Naive thymus-derived CD4-positive, alpha-beta T cell (primary cell): ENCODE measurements at regions of chr1 and their contacts with region 1.

Region 1: GRCh38 chr1:98870959-98871903 is 133.4 kb downstream of the PLPPR5 start:
- DNase-seq: peak in 8 of 9 donors; percentile 27 to 96 (median 92)
- ATAC-seq: peak; percentile 96
- H3K4me3 ChIP-seq: peak overlapping the region; percentile 56
- H3K4me3 Mint-ChIP-seq: peak overlapping the region; percentile 74 to 91 (median 86)
- H3K27ac ChIP-seq: peak overlapping the region; percentile 83
- H3K27ac Mint-ChIP-seq: peak overlapping the region; percentile 88 to 97 (median 93)
- H3K4me1 ChIP-seq: peaks cover 18 to 24% of the 10 kb centered on the region in 2 donors
- H3K4me1 Mint-ChIP-seq: peaks cover 21 to 66% (median 47%) of the 10 kb centered on the region in 7 donors
- H3K27me3 ChIP-seq: no peaks in the 10 kb centered on the region
- H3K27me3 Mint-ChIP-seq: no peaks in the 10 kb centered on the region

Region 2: GRCh38 chr1:98813738-98814309 is 57.4 kb before region 1 on chr1:
- CTCF ChIA-PET with region 1: no interaction called
- POLR2A ChIA-PET with region 1: interaction called, 3 read pairs
- intact Hi-C with region 1: loop called (anchors 5 kb)
- DNase-seq: no peak
- ATAC-seq: no peak
- H3K4me3 ChIP-seq: no peak overlapping the region
- H3K4me3 Mint-ChIP-seq: peak overlapping the region in 6 of 10 donors; percentile 6 to 48 (median 41)
- H3K27ac ChIP-seq: no peak overlapping the region
- H3K27ac Mint-ChIP-seq: peak overlapping the region in 6 of 9 donors; percentile 6 to 60 (median 14)
- H3K4me1 ChIP-seq: no peaks in the 10 kb centered on the region
- H3K4me1 Mint-ChIP-seq: peaks cover 4 to 28% (median 15%) of the 10 kb centered on the region in 7 donors
- H3K27me3 ChIP-seq: no peaks in the 10 kb centered on the region
- H3K27me3 Mint-ChIP-seq: no peaks in the 10 kb centered on the region

Region 3: GRCh38 chr1:98849969-98850636 is 21.1 kb before region 1 on chr1:
- CTCF ChIA-PET with region 1: interaction called, 3 read pairs
- POLR2A ChIA-PET with region 1: interaction called, 7 read pairs
- intact Hi-C with region 1: loop called in 1 of 2 experiments (anchors 1 kb)
- DNase-seq: peak in 6 of 9 donors; percentile 29 to 61 (median 50)
- ATAC-seq: peak; percentile 80
- H3K4me3 ChIP-seq: peak overlapping the region; percentile 1
- H3K4me3 Mint-ChIP-seq: peak overlapping the region in 8 of 10 donors; percentile 49 to 80 (median 65)
- H3K27ac ChIP-seq: no peak overlapping the region
- H3K27ac Mint-ChIP-seq: peak overlapping the region in 8 of 9 donors; percentile 4 to 77 (median 68)
- H3K4me1 ChIP-seq: peaks cover 20 to 25% of the 10 kb centered on the region in 2 donors
- H3K4me1 Mint-ChIP-seq: peaks cover 10 to 36% (median 34%) of the 10 kb centered on the region in 7 donors
- H3K27me3 ChIP-seq: no peaks in the 10 kb centered on the region
- H3K27me3 Mint-ChIP-seq: no peaks in the 10 kb centered on the region

Region 4: GRCh38 chr1:98929437-98929836 is 58.2 kb after region 1 on chr1:
- CTCF ChIA-PET with region 1: no interaction called
- POLR2A ChIA-PET with region 1: no interaction called
- intact Hi-C with region 1: loop called in 1 of 2 experiments (anchors 5 kb)
- DNase-seq: no peak
- ATAC-seq: no peak
- H3K4me3 ChIP-seq: no peak overlapping the region
- H3K4me3 Mint-ChIP-seq: no peak overlapping the region
- H3K27ac ChIP-seq: no peak overlapping the region
- H3K27ac Mint-ChIP-seq: no peak overlapping the region
- H3K4me1 ChIP-seq: no peaks in the 10 kb centered on the region
- H3K4me1 Mint-ChIP-seq: peaks cover 0 to 6% (median 1%) of the 10 kb centered on the region in 7 donors
- H3K27me3 ChIP-seq: no peaks in the 10 kb centered on the region
- H3K27me3 Mint-ChIP-seq: peaks cover 0 to 8% (median 0%) of the 10 kb centered on the region in 5 donors